ENCODE measurements at regions of chr4 and their contacts with region 1.

Region 1: DNA sequence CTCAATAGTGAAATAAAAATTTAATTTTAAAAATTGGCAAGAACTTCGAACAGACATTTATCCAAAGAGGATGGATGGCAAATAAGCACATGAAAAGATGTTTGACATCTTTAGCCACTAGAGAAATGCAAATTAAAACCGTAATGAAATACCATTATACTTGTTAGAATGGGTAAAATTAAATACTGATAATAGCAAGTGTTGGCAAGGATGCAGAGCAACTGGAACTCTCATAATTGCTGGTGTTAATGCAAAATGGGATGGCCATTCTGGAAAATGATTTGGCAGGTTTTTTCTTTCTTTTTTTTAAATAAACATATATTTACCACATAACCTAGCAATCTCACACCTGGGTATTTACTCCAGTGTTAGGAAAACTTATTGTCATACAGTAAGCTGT is 51.7 kb downstream of the HERC3 start:
- H3K4me3 Mint-ChIP-seq: no peak overlapping the region
- H3K27ac Mint-ChIP-seq: no peak overlapping the region
- H3K4me1 Mint-ChIP-seq: peaks cover 5% of the 10 kb centered on the region
- H3K27me3 Mint-ChIP-seq: no peaks in the 10 kb centered on the region

Region 2: DNA sequence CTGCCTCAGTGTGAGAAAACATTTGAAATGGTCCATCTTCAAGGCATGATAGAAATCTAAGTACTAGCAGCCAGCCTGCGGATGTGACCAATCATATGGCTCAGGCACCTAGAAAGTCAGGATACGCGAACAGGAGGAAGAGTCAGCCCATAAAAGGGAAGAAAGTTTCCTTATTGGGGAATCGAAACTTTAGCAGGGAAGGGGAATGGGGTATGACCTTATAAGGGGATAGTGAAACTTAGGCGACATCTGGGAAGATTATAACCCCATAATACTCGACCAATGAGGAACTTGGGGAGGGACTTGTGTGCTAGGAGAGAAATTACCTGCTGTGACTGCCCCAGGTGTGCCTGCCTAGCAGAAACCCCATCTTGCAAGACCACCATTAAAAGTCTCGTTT is 94.1 kb before region 1 on chr4:
- intact Hi-C with region 1: loop called (anchors 5 kb)
- H3K4me3 Mint-ChIP-seq: no peak overlapping the region
- H3K27ac Mint-ChIP-seq: no peak overlapping the region
- H3K4me1 Mint-ChIP-seq: no peaks in the 10 kb centered on the region
- H3K27me3 Mint-ChIP-seq: no peaks in the 10 kb centered on the region